HEK293 (cell line): ENCODE measurements at regions of chr7 and their contacts with region 1.

Region 1: GRCh38 chr7:33334349-33334748 is 205.0 kb downstream of the BBS9 start:
- H3K4me3 ChIP-seq: no peak overlapping the region
- H3K27ac ChIP-seq: no peak overlapping the region
- H3K4me1 ChIP-seq: no peaks in the 10 kb centered on the region
- CTCF ChIP-seq: no peak

Region 2: GRCh38 chr7:33185786-33186185 is 148.6 kb before region 1 on chr7:
- CTCF ChIA-PET with region 1: interaction called, 10 read pairs
- POLR2A ChIA-PET with region 1: no interaction called
- H3K4me3 ChIP-seq: no peak overlapping the region
- H3K27ac ChIP-seq: no peak overlapping the region
- H3K4me1 ChIP-seq: no peaks in the 10 kb centered on the region
- CTCF ChIP-seq: no peak

Region 3: DNA sequence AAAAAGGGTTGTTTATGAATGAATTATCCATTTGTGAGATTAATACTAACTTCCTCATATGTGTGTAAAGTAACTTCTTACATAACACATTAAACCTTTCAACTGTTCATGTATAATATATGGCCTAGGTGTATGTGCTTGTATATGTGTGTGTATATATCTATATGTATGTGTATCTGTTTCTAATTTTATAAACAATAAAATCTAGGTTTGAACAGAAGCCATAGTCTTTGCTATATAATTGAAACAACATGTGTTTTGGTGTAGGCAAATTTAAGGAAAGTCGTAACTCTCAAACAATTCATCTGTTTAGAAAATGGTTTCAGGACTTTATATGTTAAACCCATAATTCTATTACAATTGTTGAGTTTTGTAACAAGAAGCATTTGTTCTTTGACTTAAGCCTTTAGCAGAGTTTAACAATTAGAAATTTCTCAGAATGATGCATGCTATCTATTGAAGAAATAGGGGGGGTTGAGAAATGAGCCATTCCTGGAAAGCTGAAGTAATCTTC is 101.7 kb before region 1 on chr7:
- CTCF ChIA-PET with region 1: no interaction called
- POLR2A ChIA-PET with region 1: no interaction called
- H3K4me3 ChIP-seq: no peak overlapping the region
- H3K27ac ChIP-seq: no peak overlapping the region
- H3K4me1 ChIP-seq: no peaks in the 10 kb centered on the region
- CTCF ChIP-seq: no peak

Region 4: DNA sequence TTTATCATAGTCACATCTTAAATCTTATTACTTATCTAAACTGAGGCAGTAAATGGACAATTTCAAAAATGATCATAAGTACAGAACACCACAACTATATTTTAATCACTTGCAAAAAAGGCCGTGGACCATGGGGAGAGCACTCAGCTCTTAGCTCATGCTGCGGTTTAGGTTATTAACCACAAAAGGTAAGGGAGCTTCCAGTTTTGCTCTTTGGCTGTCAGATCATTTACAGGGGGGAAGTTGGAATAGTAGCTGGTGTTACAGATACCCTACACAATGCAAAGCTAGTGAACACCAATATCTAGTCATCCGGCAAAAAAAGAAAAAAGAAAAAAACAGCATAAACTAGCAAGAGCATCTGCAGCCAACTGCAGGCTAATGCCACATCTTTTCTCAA is 58.0 kb before region 1 on chr7:
- CTCF ChIA-PET with region 1: no interaction called
- POLR2A ChIA-PET with region 1: no interaction called
- H3K4me3 ChIP-seq: no peak overlapping the region
- H3K27ac ChIP-seq: no peak overlapping the region
- H3K4me1 ChIP-seq: no peaks in the 10 kb centered on the region
- CTCF ChIP-seq: no peak

Region 5: GRCh38 chr7:33432821-33433220 is 98.5 kb after region 1 on chr7:
- CTCF ChIA-PET with region 1: no interaction called
- POLR2A ChIA-PET with region 1: no interaction called
- H3K4me3 ChIP-seq: no peak overlapping the region
- H3K27ac ChIP-seq: no peak overlapping the region
- H3K4me1 ChIP-seq: no peaks in the 10 kb centered on the region
- CTCF ChIP-seq: no peak

Region 6: GRCh38 chr7:34080516-34080915 is 746.2 kb after region 1 on chr7:
- CTCF ChIA-PET with region 1: no interaction called
- POLR2A ChIA-PET with region 1: no interaction called
- H3K4me3 ChIP-seq: no peak overlapping the region
- H3K27ac ChIP-seq: no peak overlapping the region
- H3K4me1 ChIP-seq: no peaks in the 10 kb centered on the region
- CTCF ChIP-seq: no peak